Calu3 (cell line): ENCODE measurements at regions of chr5 and their contacts with region 1.

Region 1: GRCh38 chr5:172006321-172007174 is at the start of gene FBXW11:
- DNase-seq: peak; percentile 97
- H3K4me3 Mint-ChIP-seq: peak within 1 kb of the TSS; percentile 97
- H3K27ac Mint-ChIP-seq: peak within 1 kb of the TSS; percentile 98
- H3K4me1 Mint-ChIP-seq: peaks cover 64% of the 10 kb centered on the region
- H3K27me3 Mint-ChIP-seq: no peaks in the 10 kb centered on the region
- CTCF ChIP-seq: no peak
- total RNA-seq, gene FBXW11: 63.3 and 66.4 TPM in 2 replicates

Region 2: GRCh38 chr5:171387345-171387969 is 619.1 kb before region 1 on chr5 and contains the start of gene NPM1:
- CTCF ChIA-PET with region 1: no interaction called
- intact Hi-C with region 1: loop called (anchors 10 kb)
- DNase-seq: peak; percentile 99
- H3K4me3 Mint-ChIP-seq: peak within 1 kb of the TSS; percentile 90
- H3K27ac Mint-ChIP-seq: peak within 1 kb of the TSS; percentile 95
- H3K4me1 Mint-ChIP-seq: peaks cover 38% of the 10 kb centered on the region
- H3K27me3 Mint-ChIP-seq: peaks cover 11% of the 10 kb centered on the region
- CTCF ChIP-seq: no peak
- total RNA-seq, gene NPM1: 1,708 and 1,863 TPM in 2 replicates

Region 3: DNA sequence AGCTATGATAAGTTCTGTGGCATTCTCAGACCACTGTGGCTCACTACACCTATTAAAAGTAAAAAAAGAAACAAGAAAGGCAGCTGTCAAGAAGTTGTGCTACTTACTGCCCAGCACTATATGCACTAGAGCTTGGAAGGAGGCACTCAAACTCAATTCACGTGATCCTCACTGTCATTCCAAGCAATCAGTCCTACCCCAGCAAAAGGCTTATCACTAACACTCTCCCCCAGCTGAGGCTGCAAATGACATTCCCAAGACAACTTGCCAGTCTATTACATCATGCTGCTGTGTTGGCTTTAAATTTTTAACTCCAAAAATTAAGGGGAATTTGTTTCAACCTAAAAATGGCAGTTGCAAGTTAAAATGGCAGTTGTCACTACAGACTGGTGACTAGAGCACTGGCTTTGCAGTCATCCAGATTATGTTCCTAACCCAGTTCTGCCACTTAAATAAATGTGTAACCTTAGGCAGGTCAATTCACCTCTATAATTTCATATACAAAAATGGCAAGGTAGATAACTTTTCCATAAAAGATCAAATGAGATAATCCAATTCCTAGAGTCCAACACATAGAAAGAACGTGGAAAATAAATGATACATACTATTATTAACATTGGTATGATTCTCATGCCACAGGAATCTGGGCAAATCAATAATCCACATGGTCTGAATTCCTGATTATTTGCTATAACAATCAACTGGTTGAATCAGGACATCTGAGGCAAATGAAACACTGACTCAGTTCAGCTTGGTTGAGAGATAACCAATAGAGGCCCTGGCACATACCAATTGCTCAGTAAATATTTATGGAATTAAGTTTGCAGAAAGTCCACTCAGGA is 52.5 kb before region 1 on chr5:
- CTCF ChIA-PET with region 1: interaction called, 8 read pairs
- intact Hi-C with region 1: loop called (anchors 2 kb)
- DNase-seq: peak; percentile 46
- H3K4me3 Mint-ChIP-seq: peak overlapping the region; percentile 34
- H3K27ac Mint-ChIP-seq: peak overlapping the region; percentile 68
- H3K4me1 Mint-ChIP-seq: peaks cover 62% of the 10 kb centered on the region
- H3K27me3 Mint-ChIP-seq: no peaks in the 10 kb centered on the region
- CTCF ChIP-seq: no peak

Region 4: GRCh38 chr5:172380987-172381643 is 374.6 kb after region 1 on chr5:
- CTCF ChIA-PET with region 1: no interaction called
- intact Hi-C with region 1: no loop called
- DNase-seq: no peak
- H3K4me3 Mint-ChIP-seq: no peak overlapping the region
- H3K27ac Mint-ChIP-seq: no peak overlapping the region
- H3K4me1 Mint-ChIP-seq: peaks cover 35% of the 10 kb centered on the region
- H3K27me3 Mint-ChIP-seq: no peaks in the 10 kb centered on the region
- CTCF ChIP-seq: no peak